GM13976 (cell line): ENCODE measurements at regions of chr20 and their contacts with region 1.

Region 1: DNA sequence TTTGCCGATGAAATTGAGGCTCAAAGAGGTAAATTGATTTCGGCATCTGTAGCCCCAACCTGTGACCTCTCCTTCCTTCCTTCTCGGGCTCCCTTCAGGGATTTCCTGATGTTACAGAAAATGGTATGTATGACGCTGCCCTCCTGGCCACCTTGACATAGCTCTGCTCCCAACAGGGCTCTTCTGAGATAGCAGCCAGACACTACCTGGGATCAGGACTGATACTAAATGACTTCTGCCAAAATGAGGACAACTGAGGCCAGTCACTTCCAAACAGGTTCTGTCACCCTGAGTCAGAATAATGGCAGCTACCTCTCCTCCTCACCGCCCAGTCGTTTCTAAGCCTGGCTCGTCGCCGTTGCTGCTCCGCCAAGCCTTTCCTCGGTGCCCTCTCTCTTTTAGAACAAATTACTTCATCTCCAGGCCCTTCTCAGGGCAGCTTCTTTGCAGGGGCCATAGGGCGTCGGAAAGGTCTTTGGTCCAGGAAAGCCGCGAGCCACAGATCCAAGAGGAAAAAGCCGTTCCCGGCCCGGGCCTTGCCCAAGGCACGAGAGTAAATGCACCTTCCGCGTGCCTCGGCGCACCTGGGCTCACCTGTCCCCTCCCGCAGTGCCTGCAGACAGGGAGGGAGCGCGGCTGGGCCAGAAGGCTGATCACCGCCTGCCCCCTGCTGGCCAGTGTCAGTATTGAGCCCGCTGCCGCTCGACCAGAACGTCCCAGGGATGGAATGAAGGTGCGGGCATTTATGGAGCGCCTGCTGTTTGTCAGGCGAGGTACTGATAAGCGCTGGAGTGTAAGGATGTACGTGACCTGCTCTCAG is 904 bp upstream of the LPIN3 start:
- DNase-seq: peak; percentile 91
- CTCF ChIP-seq: peak; percentile 96

Region 2: GRCh38 chr20:41173161-41173721 is 166.5 kb before region 1 on chr20:
- in situ Hi-C with region 1: loop called (anchors 5 kb)
- DNase-seq: peak; percentile 81
- CTCF ChIP-seq: peak; percentile 96